Left cardiac atrium (tissue), 4 donors: ENCODE measurements at regions of chr18 and their contacts with region 1.

Region 1: GRCh38 chr18:33231474-33232317 is 208.8 kb downstream of the CCDC178 start:
- DNase-seq: peak; percentile 68
- ATAC-seq: peak; percentile 74 to 78

Region 2: DNA sequence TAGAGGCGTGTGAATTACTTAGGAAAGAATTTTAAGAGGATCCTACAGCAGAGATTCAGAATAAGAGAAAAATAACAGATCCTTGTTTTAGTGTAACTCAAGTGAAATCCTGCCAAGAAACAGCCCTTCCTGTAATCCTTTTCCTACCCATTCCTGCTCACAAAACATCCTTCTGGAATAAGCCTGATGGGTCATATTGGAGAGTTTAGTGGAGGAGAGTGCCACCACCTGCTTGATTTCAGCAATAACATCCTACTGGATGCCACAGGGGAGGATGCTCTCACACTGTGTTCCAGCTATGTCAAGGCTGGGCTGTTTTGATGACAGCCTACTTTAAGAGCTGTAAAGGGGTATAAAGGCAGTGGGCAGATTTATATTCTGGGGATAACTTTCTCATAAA is 263.6 kb after region 1 on chr18:
- intact Hi-C with region 1: loop called in 1 of 2 experiments (anchors 1 kb)
- DNase-seq: no peak
- ATAC-seq: peak; percentile 68 to 81

Region 3: GRCh38 chr18:33761363-33761762 is 529.7 kb after region 1 on chr18:
- intact Hi-C with region 1: loop called in 1 of 2 experiments (anchors 5 kb)
- DNase-seq: no peak
- ATAC-seq: peak; percentile 50 to 59